ENCODE measurements at regions of chr17 and their contacts with region 1.

Region 1: GRCh38 chr17:50200457-50201275 is 765 bp downstream of the COL1A1 start:
- DNase-seq: peak; percentile 60 to 91 (median 82)

Region 2: GRCh38 chr17:50222922-50223321 is 22.3 kb after region 1 on chr17:
- intact Hi-C with region 1: no loop called
- DNase-seq: no peak

Region 3: GRCh38 chr17:50269477-50270434 is 69.1 kb after region 1 on chr17:
- intact Hi-C with region 1: loop called (anchors 2 kb)
- DNase-seq: peak; percentile 27 to 82 (median 66)

Region 4: GRCh38 chr17:50297407-50297865 is 96.8 kb after region 1 on chr17:
- intact Hi-C with region 1: loop called (anchors 2 kb)
- DNase-seq: peak; percentile 65 to 91 (median 80)

Region 5: GRCh38 chr17:50318501-50319285 is 118.0 kb after region 1 on chr17:
- intact Hi-C with region 1: no loop called
- DNase-seq: no peak

Measured in head of caudate nucleus (tissue), 42 donors.